Endothelial cell of umbilical vein (primary cell): ENCODE measurements at regions of chr22 and their contacts with region 1.

Region 1: GRCh38 chr22:46355371-46355995 is 20.0 kb downstream of the TRMU start:
- DNase-seq: peak; percentile 42
- H3K4me3 ChIP-seq: no peak overlapping the region
- H3K27ac ChIP-seq: no peak overlapping the region
- H3K4me1 ChIP-seq: no peaks in the 10 kb centered on the region
- H3K27me3 ChIP-seq: no peaks in the 10 kb centered on the region
- CTCF ChIP-seq: peak; percentile 77 to 83
- POLR2A ChIP-seq: no peak

Region 2: GRCh38 chr22:46476547-46476941 is 121.1 kb after region 1 on chr22:
- CTCF ChIA-PET with region 1: no interaction called
- POLR2A ChIA-PET with region 1: no interaction called
- dilution Hi-C with region 1: no loop called
- intact Hi-C with region 1: no loop called
- DNase-seq: no peak
- H3K4me3 ChIP-seq: no peak overlapping the region
- H3K27ac ChIP-seq: no peak overlapping the region
- H3K4me1 ChIP-seq: no peaks in the 10 kb centered on the region
- H3K27me3 ChIP-seq: peaks cover 0 to 2% of the 10 kb centered on the region in 2 experiments
- CTCF ChIP-seq: no peak
- POLR2A ChIP-seq: no peak

Region 3: GRCh38 chr22:46542011-46542985 is 186.8 kb after region 1 on chr22:
- CTCF ChIA-PET with region 1: interaction called, 33 read pairs
- POLR2A ChIA-PET with region 1: no interaction called
- dilution Hi-C with region 1: no loop called
- intact Hi-C with region 1: loop called (anchors 1 kb)
- DNase-seq: peak; percentile 66
- H3K4me3 ChIP-seq: no peak overlapping the region
- H3K27ac ChIP-seq: no peak overlapping the region
- H3K4me1 ChIP-seq: peaks cover 22% of the 10 kb centered on the region
- H3K27me3 ChIP-seq: peaks cover 12 to 21% of the 10 kb centered on the region in 2 experiments
- CTCF ChIP-seq: peak; percentile 90 to 99
- POLR2A ChIP-seq: no peak